ENCODE measurements at regions of chr2 and their contacts with region 1.

Region 1: DNA sequence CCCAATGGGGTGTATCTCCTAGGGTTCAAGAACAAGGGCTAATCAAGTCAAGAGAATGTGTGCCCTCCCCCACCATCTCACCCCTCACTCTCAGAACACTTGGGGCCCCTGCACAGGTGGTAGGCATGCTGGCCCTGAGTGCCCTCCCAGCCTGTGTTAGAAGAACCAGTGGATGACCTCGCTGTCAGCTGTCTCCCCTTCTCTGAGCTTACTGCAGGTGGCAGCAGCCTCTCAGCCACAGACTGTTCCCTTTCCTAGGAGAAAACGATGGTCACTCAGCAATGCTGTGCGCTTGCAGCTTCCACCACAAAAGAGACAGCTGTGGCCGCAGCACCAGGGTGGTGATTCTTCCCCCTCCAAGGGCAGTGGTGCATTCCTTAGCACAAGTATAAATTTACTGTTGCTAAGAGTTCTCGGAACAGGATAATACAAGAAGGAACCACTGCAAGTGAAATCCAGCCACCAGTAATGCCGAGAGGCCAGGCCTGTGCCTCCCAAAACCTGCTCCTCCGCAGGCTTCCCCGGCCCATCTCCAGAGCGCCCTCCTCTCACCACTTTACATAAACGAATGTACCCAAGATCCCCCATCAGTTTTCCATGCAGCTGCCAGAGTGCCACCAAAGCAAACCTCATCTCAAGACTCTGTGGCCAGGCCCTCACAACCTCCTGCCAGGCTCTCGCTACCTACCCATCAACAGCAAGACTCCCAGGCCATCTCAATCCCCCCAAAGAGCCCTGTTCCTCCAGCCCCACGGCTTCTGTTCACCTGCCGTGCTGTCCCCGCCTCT is 935 bp upstream of the RAMP1 start:
- DNase-seq: peak; percentile 92
- H3K4me3 ChIP-seq: peak overlapping the region; percentile 66 to 81 (median 78)
- H3K27ac ChIP-seq: peak overlapping the region; percentile 91 to 97 (median 96)
- H3K4me1 ChIP-seq: peaks cover 0 to 32% (median 30%) of the 10 kb centered on the region in 4 donors
- H3K27me3 ChIP-seq: no peaks in the 10 kb centered on the region
- CTCF ChIP-seq: peak; percentile 78 to 89 (median 84)
- EP300 ChIP-seq: no peak
- POLR2A ChIP-seq: no peak

Region 2: GRCh38 chr2:236517251-236518031 is 1341.0 kb before region 1 on chr2:
- intact Hi-C with region 1: no loop called
- DNase-seq: no peak
- H3K4me3 ChIP-seq: no peak overlapping the region
- H3K27ac ChIP-seq: no peak overlapping the region
- H3K4me1 ChIP-seq: peaks cover 0 to 23% (median 9%) of the 10 kb centered on the region in 4 donors
- H3K27me3 ChIP-seq: no peaks in the 10 kb centered on the region
- CTCF ChIP-seq: no peak
- EP300 ChIP-seq: no peak
- POLR2A ChIP-seq: no peak

Region 3: DNA sequence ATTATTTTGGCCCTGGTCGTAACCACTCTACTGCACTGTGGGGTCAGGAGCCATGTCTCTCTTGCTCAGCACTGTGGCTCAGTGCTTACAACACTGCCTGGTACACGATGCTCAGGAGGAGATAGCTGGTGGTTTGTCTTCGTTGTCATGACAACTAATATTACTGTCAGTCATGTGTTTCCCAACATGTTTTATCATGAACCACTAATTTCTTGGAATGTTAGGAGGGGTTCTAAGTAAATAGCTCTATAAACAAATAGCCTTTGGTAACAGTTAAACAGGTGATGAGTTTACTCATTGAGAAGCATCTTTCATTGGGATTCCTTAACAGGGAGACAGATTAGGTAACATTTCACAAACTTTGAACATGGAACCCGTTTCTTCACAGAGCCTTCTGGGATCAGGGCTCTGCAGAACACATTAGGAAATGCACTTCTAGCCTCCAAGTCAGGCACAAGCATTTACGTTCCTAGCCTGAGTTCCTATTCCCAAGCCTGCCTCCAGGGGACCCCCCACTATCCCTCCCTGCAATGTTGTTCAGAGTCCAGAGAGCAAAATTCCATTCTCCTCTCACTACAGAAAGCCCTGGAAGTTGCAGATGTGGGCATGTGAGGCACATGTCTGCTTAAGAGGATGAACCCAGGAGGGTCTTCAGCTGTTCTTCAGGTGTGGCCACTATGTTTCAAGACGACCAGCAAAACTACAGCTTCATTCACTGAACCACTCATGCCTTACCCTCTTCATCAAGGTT is 66.3 kb before region 1 on chr2:
- intact Hi-C with region 1: no loop called
- DNase-seq: no peak
- H3K4me3 ChIP-seq: no peak overlapping the region
- H3K27ac ChIP-seq: no peak overlapping the region
- H3K4me1 ChIP-seq: no peaks in the 10 kb centered on the region
- H3K27me3 ChIP-seq: no peaks in the 10 kb centered on the region
- CTCF ChIP-seq: no peak
- EP300 ChIP-seq: no peak
- POLR2A ChIP-seq: no peak

Region 4: DNA sequence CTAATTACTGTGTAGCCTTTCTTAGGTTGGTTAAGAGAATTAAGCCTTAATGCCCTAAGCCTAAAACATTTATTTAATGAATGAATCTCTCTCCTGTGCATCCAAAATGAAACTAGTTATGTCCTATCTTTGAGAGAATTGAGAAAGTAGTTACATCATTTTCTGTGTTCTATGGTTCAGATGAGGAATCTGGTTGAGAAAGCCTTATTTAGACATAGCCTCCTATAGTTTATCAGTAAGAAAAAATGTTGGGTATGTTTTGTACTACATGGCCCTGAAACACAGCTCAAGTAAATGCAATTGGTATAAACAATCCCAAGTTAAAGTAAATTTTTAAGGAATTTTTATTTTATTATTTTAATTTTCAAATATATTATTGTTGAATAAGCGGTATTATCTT is 24.9 kb before region 1 on chr2:
- intact Hi-C with region 1: no loop called
- DNase-seq: no peak
- H3K4me3 ChIP-seq: no peak overlapping the region
- H3K27ac ChIP-seq: no peak overlapping the region
- H3K4me1 ChIP-seq: no peaks in the 10 kb centered on the region
- H3K27me3 ChIP-seq: no peaks in the 10 kb centered on the region
- CTCF ChIP-seq: no peak
- EP300 ChIP-seq: no peak
- POLR2A ChIP-seq: no peak

Region 5: GRCh38 chr2:237923481-237924163 is 65.1 kb after region 1 on chr2:
- intact Hi-C with region 1: loop called (anchors 2 kb)
- DNase-seq: peak; percentile 93
- H3K4me3 ChIP-seq: peak overlapping the region in 3 of 4 donors; percentile 26 to 32 (median 27)
- H3K27ac ChIP-seq: peak overlapping the region; percentile 56 to 78 (median 64)
- H3K4me1 ChIP-seq: peaks cover 0 to 19% (median 14%) of the 10 kb centered on the region in 4 donors
- H3K27me3 ChIP-seq: no peaks in the 10 kb centered on the region
- CTCF ChIP-seq: peak; percentile 70 to 96 (median 93)
- EP300 ChIP-seq: no peak
- POLR2A ChIP-seq: no peak

Region 6: GRCh38 chr2:237935740-237936452 is 77.4 kb after region 1 on chr2:
- intact Hi-C with region 1: no loop called
- DNase-seq: no peak
- H3K4me3 ChIP-seq: no peak overlapping the region
- H3K27ac ChIP-seq: no peak overlapping the region
- H3K4me1 ChIP-seq: peaks cover 0 to 18% (median 14%) of the 10 kb centered on the region in 4 donors
- H3K27me3 ChIP-seq: no peaks in the 10 kb centered on the region
- CTCF ChIP-seq: no peak
- EP300 ChIP-seq: no peak
- POLR2A ChIP-seq: no peak

Region 7: DNA sequence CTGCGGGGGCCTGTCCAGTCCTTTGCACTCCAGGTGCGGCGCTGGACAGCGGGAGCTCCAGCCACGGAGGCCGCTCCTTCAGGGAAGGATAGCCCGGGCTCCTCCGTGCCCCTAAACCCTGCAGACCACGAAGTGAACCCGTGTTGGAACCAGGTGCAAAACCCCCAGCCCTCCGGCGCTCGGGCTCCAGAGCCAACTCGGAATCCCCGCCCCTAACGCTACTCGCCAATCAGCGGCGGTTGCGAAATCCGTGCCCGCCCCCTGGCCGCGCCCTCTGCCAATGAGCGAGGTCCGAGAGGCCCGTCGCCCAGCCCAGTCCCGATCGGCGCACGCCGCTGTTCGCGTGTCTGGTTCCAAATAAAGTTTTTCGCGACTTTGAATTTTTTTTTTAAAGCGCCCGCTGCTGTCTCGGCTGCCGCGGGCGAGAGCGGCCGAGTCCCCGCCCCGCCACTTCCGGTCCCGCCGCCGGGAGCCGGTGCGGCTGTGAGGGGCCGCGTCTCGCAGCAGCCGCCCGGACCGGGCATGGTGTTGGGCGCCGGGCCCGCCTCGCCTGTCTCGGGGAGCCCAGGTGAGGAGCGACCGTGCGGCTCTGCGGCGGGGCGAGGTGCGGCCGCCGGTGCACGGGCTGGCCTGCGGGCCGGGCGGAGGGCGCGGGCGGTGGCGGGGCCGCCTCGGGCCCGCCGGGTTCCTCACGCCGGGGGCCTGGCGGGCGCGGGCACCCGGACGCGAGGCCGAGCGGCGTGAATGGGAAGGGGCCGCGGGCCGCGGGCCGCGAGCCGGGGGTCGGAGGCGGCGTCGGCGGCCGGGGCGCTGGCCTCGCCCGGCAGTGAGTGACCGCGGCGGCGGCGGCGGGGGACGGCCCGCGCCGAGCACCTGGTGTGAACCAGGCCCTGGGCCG is 108.3 kb after region 1 on chr2 and contains the start of gene UBE2F:
- intact Hi-C with region 1: loop called (anchors 1 kb)
- DNase-seq: peak; percentile 98
- H3K4me3 ChIP-seq: peak within 1 kb of the TSS; percentile 55 to 79 (median 72)
- H3K27ac ChIP-seq: peak within 1 kb of the TSS; percentile 71 to 82 (median 80)
- H3K4me1 ChIP-seq: peaks cover 0 to 41% (median 28%) of the 10 kb centered on the region in 4 donors
- H3K27me3 ChIP-seq: no peaks in the 10 kb centered on the region
- CTCF ChIP-seq: no peak
- EP300 ChIP-seq: peak in 1 of 4 donors; percentile 53
- POLR2A ChIP-seq: no peak
- total RNA-seq, gene UBE2F: 50.7 to 81.5 (median 66.4) TPM

Region 8: GRCh38 chr2:238060542-238061314 is 202.2 kb after region 1 on chr2 and contains the start of gene SCLY:
- intact Hi-C with region 1: loop called (anchors 2 kb)
- DNase-seq: peak; percentile 99
- H3K4me3 ChIP-seq: peak within 1 kb of the TSS; percentile 72 to 91 (median 82)
- H3K27ac ChIP-seq: peak within 1 kb of the TSS; percentile 84 to 96 (median 94)
- H3K4me1 ChIP-seq: peaks cover 0 to 25% (median 16%) of the 10 kb centered on the region in 4 donors
- H3K27me3 ChIP-seq: no peaks in the 10 kb centered on the region
- CTCF ChIP-seq: no peak
- EP300 ChIP-seq: peak in 1 of 4 donors; percentile 39
- POLR2A ChIP-seq: peak; percentile 83 to 89
- total RNA-seq, gene SCLY: 10.3 to 14.4 (median 11.7) TPM

Region 9: GRCh38 chr2:238169708-238170251 is 311.3 kb after region 1 on chr2:
- intact Hi-C with region 1: loop called (anchors 5 kb)
- DNase-seq: no peak
- H3K4me3 ChIP-seq: no peak overlapping the region
- H3K27ac ChIP-seq: peak overlapping the region; percentile 4 to 76 (median 72)
- H3K4me1 ChIP-seq: peaks cover 0 to 31% (median 28%) of the 10 kb centered on the region in 4 donors
- H3K27me3 ChIP-seq: no peaks in the 10 kb centered on the region
- CTCF ChIP-seq: no peak
- EP300 ChIP-seq: peak in 1 of 4 donors; percentile 5
- POLR2A ChIP-seq: no peak

Region 10: GRCh38 chr2:238263204-238264071 is 404.9 kb after region 1 on chr2:
- intact Hi-C with region 1: loop called (anchors 1 kb)
- DNase-seq: peak; percentile 96
- H3K4me3 ChIP-seq: no peak overlapping the region
- H3K27ac ChIP-seq: peak overlapping the region; percentile 50 to 66 (median 65)
- H3K4me1 ChIP-seq: peaks cover 0 to 33% (median 18%) of the 10 kb centered on the region in 4 donors
- H3K27me3 ChIP-seq: no peaks in the 10 kb centered on the region
- CTCF ChIP-seq: peak; percentile 68 to 92 (median 90)
- EP300 ChIP-seq: no peak
- POLR2A ChIP-seq: no peak

Region 11: GRCh38 chr2:239326831-239327535 is 1468.5 kb after region 1 on chr2:
- intact Hi-C with region 1: loop called (anchors 10 kb)
- DNase-seq: peak; percentile 68
- H3K4me3 ChIP-seq: no peak overlapping the region
- H3K27ac ChIP-seq: peak overlapping the region; percentile 92 to 97 (median 96)
- H3K4me1 ChIP-seq: peaks cover 0 to 100% (median 91%) of the 10 kb centered on the region in 4 donors
- H3K27me3 ChIP-seq: no peaks in the 10 kb centered on the region
- CTCF ChIP-seq: no peak
- EP300 ChIP-seq: no peak
- POLR2A ChIP-seq: no peak

Measured in sigmoid colon (tissue), 7 donors.